ENCODE measurements at regions of chr14 and their contacts with region 1.

Region 1: DNA sequence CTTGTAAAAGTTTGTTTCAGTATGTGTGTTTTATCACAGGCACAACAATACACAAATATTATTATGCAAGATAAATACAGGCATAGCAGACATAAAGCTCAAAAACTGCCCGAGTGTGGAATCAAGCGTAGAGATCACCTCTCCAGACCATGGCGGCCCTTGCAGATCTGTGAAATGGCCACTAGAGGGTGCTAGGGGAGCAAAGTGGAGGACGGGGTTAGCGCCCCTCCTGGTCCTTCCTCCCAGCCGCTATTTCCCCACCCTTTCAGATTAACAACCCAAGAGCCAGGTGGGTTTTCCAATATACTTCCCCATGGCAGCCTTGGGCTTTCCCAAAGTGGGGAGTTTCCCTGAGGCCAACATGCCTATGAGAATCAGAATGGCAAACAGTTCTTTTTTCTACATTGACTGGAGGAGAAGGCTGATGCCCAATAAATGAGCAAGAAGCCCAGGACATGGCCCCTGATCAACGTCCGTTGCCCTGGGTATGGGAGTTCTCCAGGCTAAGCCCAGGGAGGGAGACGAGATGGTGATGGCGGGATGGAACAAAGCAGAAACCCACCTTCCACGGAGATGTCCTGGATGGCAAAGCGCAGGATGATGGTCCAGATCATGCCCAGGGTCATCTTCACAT is 67.4 kb downstream of the ACTN1 start:
- DNase-seq: peak; percentile 80 to 85
- H3K4me3 ChIP-seq: no peak overlapping the region
- H3K4me3 Mint-ChIP-seq: no peak overlapping the region
- H3K27ac Mint-ChIP-seq: no peak overlapping the region
- H3K4me1 ChIP-seq: no peaks in the 10 kb centered on the region
- H3K4me1 Mint-ChIP-seq: no peaks in the 10 kb centered on the region
- H3K27me3 ChIP-seq: no peaks in the 10 kb centered on the region
- H3K27me3 Mint-ChIP-seq: no peaks in the 10 kb centered on the region
- CTCF ChIP-seq: peak; percentile 97 to 98

Region 2: DNA sequence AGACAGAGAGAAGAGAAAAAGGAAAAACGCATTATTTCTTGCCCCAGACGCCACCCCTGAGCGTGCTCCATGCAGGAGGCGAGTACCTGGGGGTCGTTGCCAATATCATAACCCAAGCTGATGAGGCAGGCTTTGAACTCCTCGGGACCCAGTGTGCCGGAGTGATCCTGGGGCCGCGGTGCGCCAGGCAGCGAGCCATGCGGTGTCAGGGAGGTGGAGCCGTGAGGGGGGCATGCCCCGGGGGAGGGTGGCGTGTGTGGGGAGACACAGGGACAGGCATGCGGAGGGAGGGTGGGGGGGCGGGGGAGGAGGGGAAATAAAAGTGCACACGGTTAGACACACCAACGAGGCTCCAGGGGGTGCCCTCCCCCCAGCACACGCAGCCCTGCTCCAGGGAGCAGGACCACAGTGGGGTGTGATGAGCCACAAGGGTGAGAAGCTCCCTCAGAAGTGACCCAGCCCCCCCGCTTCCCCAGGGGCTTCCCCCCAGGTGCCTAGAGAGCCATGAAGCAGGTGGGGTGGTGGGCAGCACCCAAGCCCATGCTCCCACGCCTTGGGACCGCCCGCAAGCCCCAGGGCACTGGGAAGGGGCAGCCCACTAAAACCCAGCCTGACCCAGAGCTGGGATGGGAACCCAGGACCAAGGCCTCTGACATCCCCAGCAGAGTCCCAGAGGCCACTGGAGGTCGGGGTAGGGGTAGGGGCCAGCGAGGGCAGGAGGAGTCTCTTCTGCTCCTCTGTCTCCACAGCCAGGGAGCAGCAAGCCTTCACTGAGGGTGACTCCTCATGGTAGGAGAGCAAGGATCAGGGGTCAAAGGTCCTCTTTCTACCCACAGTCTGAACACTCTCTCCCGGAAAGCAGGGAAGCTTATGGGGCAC is 32.6 kb before region 1 on chr14:
- CTCF ChIA-PET with region 1: no interaction called
- POLR2A ChIA-PET with region 1: no interaction called
- intact Hi-C with region 1: no loop called
- DNase-seq: no peak
- H3K4me3 ChIP-seq: no peak overlapping the region
- H3K4me3 Mint-ChIP-seq: no peak overlapping the region
- H3K27ac Mint-ChIP-seq: peak overlapping the region; percentile 2
- H3K4me1 ChIP-seq: no peaks in the 10 kb centered on the region
- H3K4me1 Mint-ChIP-seq: peaks cover 2% of the 10 kb centered on the region
- H3K27me3 ChIP-seq: no peaks in the 10 kb centered on the region
- H3K27me3 Mint-ChIP-seq: no peaks in the 10 kb centered on the region
- CTCF ChIP-seq: no peak

Region 3: GRCh38 chr14:68891851-68892660 is 19.7 kb before region 1 on chr14:
- CTCF ChIA-PET with region 1: no interaction called
- POLR2A ChIA-PET with region 1: no interaction called
- intact Hi-C with region 1: no loop called
- DNase-seq: no peak
- H3K4me3 ChIP-seq: no peak overlapping the region
- H3K4me3 Mint-ChIP-seq: no peak overlapping the region
- H3K27ac Mint-ChIP-seq: no peak overlapping the region
- H3K4me1 ChIP-seq: no peaks in the 10 kb centered on the region
- H3K4me1 Mint-ChIP-seq: no peaks in the 10 kb centered on the region
- H3K27me3 ChIP-seq: no peaks in the 10 kb centered on the region
- H3K27me3 Mint-ChIP-seq: no peaks in the 10 kb centered on the region
- CTCF ChIP-seq: no peak

Region 4: GRCh38 chr14:69002069-69002468 is 90.4 kb after region 1 on chr14:
- CTCF ChIA-PET with region 1: interaction called, 8 read pairs
- POLR2A ChIA-PET with region 1: no interaction called
- intact Hi-C with region 1: loop called (anchors 1 kb)
- DNase-seq: peak; percentile 69 to 75
- H3K4me3 ChIP-seq: no peak overlapping the region
- H3K4me3 Mint-ChIP-seq: no peak overlapping the region
- H3K27ac Mint-ChIP-seq: no peak overlapping the region
- H3K4me1 ChIP-seq: peaks cover 6% of the 10 kb centered on the region; the same call in 1 of the 2 replicates
- H3K4me1 Mint-ChIP-seq: peaks cover 11% of the 10 kb centered on the region
- H3K27me3 ChIP-seq: no peaks in the 10 kb centered on the region
- H3K27me3 Mint-ChIP-seq: no peaks in the 10 kb centered on the region
- CTCF ChIP-seq: peak in 1 of 2 experiments; percentile 52

Region 5: GRCh38 chr14:69090187-69090789 is 178.6 kb after region 1 on chr14:
- CTCF ChIA-PET with region 1: no interaction called
- POLR2A ChIA-PET with region 1: no interaction called
- intact Hi-C with region 1: loop called (anchors 1 kb)
- DNase-seq: peak; percentile 51 to 58
- H3K4me3 ChIP-seq: no peak overlapping the region
- H3K4me3 Mint-ChIP-seq: no peak overlapping the region
- H3K27ac Mint-ChIP-seq: no peak overlapping the region
- H3K4me1 ChIP-seq: peaks cover 37% of the 10 kb centered on the region
- H3K4me1 Mint-ChIP-seq: peaks cover 26% of the 10 kb centered on the region
- H3K27me3 ChIP-seq: no peaks in the 10 kb centered on the region; the same call in 1 of the 2 replicates
- H3K27me3 Mint-ChIP-seq: no peaks in the 10 kb centered on the region
- CTCF ChIP-seq: peak; percentile 47 to 77

Region 6: DNA sequence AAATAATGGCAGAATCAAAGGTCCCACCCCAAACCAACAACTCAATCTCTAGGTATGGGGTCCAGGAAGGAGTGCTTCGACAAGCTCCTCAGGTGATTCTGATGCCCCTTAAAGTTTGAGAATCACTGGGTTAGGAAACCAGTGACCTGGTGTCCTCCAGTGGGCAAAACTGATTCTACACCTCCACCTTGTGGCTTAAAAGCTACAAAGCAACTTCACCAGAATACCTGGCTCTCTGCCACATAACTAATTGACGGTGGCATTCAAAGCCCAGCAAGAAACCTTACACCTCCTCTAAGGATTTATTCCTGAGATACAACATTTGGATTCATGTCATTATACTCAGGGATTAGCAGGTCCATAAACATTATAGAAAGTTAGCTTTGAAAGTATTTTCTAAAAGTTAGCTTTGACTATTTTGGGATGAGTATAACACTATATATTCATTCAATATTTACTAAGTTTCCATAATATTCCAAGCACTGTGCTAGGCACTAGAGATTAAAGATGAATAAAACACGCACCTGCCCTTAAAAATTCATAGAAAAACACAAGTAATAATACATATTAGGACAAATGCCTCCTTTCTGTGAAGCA is 195.8 kb after region 1 on chr14:
- CTCF ChIA-PET with region 1: interaction called, 7 read pairs
- POLR2A ChIA-PET with region 1: no interaction called
- intact Hi-C with region 1: loop called (anchors 1 kb)
- DNase-seq: peak; percentile 50 to 68
- H3K4me3 ChIP-seq: no peak overlapping the region
- H3K4me3 Mint-ChIP-seq: no peak overlapping the region
- H3K27ac Mint-ChIP-seq: no peak overlapping the region
- H3K4me1 ChIP-seq: no peaks in the 10 kb centered on the region
- H3K4me1 Mint-ChIP-seq: no peaks in the 10 kb centered on the region
- H3K27me3 ChIP-seq: no peaks in the 10 kb centered on the region
- H3K27me3 Mint-ChIP-seq: no peaks in the 10 kb centered on the region
- CTCF ChIP-seq: peak; percentile 64 to 74

Measured in Caco-2 (cell line).